Activated CD4-positive, alpha-beta memory T cell treated with anti-CD3 and anti-CD28 coated beads for 36 hours (primary cell): ENCODE measurements at regions of chr10 and their contacts with region 1.

Region 1: DNA sequence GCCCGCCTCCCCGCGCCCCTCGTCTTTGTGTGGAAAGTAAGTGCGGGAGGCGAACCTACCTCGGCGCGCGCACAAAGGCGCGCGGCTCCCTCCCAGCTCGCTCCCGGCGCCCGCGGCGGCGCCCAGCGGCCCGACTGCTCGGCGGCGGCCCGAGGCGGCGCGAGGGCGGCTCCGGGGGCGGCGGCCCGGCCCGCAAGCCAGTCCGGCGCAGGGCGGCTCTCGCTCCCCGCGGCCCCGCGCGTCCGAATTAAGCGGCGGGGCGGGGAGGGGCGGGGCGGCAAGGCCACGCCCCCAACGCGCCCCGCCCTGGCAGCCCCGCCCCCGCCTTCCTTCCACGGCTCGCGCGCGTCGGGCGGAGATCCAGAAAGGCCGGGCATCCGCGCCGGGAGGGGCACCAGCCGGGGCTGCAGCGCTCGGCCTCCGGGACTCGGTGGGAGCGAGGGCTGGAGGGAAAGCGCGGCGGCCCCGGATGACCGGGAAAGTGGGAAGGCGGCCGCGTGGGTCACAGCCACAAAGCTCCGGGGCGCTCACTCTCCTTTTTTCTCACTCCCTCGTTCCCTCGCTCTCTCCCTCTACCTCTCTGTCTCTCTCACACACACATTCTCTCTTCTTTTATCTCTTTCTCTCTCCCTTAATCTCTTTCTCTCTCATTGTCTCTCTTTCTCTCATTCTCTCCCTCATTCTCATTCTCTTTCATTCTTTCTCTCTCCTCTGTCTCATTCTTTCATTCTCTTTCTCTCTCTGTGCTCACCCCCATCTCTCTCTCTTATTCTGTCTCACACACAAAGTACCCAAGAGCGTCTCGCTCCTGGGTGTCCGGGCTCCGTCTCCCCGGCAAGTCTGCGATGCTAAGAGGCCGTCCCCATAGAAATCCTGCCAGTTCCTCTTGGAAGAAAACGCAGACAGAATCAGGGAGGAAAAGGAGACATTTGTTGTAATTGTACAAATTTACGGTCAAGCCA is 170.2 kb downstream of the FAM107B start:
- DNase-seq: peak; percentile 78
- H3K4me3 Mint-ChIP-seq: peak overlapping the region; percentile 93
- H3K27ac Mint-ChIP-seq: peak overlapping the region; percentile 97
- H3K4me1 Mint-ChIP-seq: peaks cover 60% of the 10 kb centered on the region
- H3K27me3 Mint-ChIP-seq: no peaks in the 10 kb centered on the region

Region 2: GRCh38 chr10:14358886-14359573 is 245.4 kb before region 1 on chr10:
- CTCF ChIA-PET with region 1: no interaction called
- POLR2A ChIA-PET with region 1: no interaction called
- intact Hi-C with region 1: no loop called
- DNase-seq: no peak
- H3K4me3 Mint-ChIP-seq: no peak overlapping the region
- H3K27ac Mint-ChIP-seq: no peak overlapping the region
- H3K4me1 Mint-ChIP-seq: no peaks in the 10 kb centered on the region
- H3K27me3 Mint-ChIP-seq: peaks cover 11% of the 10 kb centered on the region

Region 3: DNA sequence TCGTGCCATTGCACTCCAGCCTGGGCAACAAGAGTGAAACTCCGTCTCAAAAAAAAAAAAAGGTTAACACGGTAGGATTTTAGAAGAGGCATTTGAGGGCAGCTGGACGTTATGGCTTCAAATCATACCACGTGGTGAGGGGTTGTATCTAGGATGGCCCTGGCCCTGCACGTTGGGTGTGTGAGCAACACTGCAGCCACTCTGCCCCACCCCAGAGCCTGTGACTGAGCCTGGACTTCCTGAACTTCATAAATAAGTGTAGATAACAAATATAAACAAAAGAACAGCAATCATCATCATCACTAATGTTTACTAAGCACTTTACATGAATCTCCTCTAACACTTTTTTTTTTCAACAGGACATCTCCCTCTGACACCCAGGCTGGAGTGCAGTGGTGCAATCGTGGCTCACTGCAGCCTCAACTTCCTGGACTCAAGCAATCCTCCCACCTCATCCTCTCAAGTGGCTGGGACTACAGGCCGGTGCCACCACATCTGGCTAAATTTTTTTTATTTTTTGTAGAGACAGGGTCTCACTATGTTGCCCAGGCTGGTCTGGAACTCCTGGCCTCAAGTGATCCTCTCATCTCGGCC is 104.2 kb before region 1 on chr10:
- CTCF ChIA-PET with region 1: no interaction called
- POLR2A ChIA-PET with region 1: no interaction called
- intact Hi-C with region 1: loop called (anchors 2 kb)
- DNase-seq: no peak
- H3K4me3 Mint-ChIP-seq: no peak overlapping the region
- H3K27ac Mint-ChIP-seq: no peak overlapping the region
- H3K4me1 Mint-ChIP-seq: peaks cover 2% of the 10 kb centered on the region
- H3K27me3 Mint-ChIP-seq: no peaks in the 10 kb centered on the region

Region 4: DNA sequence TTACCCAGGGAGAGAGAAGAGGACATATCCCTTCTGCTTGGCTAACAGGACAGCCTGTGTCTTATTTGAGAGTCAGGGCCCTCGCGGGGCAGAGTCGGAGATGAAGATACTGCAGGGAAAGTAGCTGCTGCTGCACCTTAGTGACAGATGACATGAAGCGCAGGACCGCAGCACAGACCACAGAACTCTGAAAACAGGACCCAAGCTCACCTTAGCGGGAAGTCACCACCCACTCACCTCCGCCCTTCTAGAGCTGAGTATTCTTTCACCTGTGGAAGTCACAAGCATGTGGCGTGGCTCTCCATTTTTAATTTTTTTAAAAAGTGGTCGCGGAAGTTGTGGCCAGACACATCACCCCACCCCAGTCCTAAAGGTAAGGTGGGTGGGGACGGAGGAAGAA is 21.2 kb before region 1 on chr10:
- CTCF ChIA-PET with region 1: interaction called, 6 read pairs
- POLR2A ChIA-PET with region 1: interaction called, 14 read pairs
- intact Hi-C with region 1: loop called (anchors 1 kb)
- DNase-seq: peak; percentile 93
- H3K4me3 Mint-ChIP-seq: peak overlapping the region; percentile 56
- H3K27ac Mint-ChIP-seq: peak overlapping the region; percentile 98
- H3K4me1 Mint-ChIP-seq: peaks cover 84% of the 10 kb centered on the region
- H3K27me3 Mint-ChIP-seq: no peaks in the 10 kb centered on the region

Region 5: GRCh38 chr10:14617852-14618251 is 13.4 kb after region 1 on chr10:
- CTCF ChIA-PET with region 1: no interaction called
- POLR2A ChIA-PET with region 1: no interaction called
- intact Hi-C with region 1: no loop called
- DNase-seq: no peak
- H3K4me3 Mint-ChIP-seq: no peak overlapping the region
- H3K27ac Mint-ChIP-seq: no peak overlapping the region
- H3K4me1 Mint-ChIP-seq: peaks cover 28% of the 10 kb centered on the region
- H3K27me3 Mint-ChIP-seq: no peaks in the 10 kb centered on the region

Region 6: DNA sequence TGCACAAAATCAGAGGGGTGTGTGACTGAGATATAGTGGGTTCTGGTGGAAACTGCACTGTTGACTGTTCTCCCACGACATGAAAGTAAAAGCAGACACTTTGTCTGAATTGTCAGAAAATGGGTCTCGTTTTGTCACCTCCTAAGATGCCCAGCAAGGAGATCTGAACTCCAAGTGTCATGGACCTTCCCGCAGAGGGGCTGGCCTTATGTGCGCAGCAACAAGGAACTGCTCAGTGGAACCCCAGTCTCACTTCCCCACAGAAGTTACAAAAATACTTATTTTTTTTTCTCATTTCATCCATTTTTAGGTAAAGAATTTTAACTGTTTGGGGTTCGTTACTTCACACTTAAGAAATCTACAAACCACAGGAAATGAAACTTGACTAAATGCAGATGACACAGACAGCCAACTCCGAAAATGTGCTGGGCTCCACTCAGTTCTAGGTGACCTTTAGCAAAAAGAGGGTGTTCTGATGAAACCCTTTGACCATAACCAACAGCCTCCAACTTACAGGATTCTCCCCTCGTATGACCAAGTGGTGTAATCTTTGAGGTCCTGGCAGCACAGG is 55.2 kb after region 1 on chr10:
- CTCF ChIA-PET with region 1: interaction called, 6 read pairs
- POLR2A ChIA-PET with region 1: interaction called, 11 read pairs
- intact Hi-C with region 1: loop called (anchors 1 kb)
- DNase-seq: peak; percentile 72
- H3K4me3 Mint-ChIP-seq: peak overlapping the region; percentile 45
- H3K27ac Mint-ChIP-seq: peak overlapping the region; percentile 92
- H3K4me1 Mint-ChIP-seq: peaks cover 77% of the 10 kb centered on the region
- H3K27me3 Mint-ChIP-seq: no peaks in the 10 kb centered on the region

Region 7: DNA sequence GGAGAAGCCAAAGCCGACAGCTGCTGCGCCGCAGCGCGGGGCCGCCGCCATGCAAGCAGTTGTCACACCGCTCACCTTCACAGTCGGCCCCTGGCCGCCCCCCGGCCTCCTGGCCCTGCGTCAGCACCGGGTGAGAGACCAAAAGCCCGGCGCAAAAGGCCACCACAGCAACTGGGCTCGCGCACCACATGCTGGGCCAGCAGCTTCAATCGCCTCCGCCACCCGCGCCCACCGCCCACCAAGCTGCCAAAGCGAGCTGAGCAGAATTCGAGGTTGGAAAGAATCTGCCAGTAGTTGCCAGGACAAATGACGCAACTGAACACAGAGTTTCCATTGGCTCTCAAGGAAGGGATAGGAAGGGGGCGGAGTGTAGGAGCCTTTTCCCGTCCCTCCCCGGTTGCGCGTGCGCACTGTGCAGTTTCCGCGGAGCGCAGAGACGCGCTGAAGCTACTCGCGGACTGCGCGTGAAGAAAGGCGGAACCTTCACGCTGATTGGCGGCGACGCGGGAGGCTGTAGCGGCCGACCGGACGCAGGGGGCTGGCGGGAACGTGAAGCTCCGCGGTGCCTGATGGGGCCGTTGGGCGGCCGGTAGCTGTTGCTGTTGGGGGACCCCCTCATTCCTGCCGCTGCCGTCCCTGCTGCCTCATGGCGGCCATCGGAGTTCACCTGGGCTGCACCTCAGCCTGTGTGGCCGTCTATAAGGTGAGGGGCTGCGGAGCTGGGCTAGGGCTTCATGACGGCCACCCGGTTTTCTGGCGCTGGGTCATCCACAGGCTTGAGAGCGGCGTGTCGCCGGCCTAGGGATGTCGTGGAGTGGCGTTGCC is 233.5 kb after region 1 on chr10 and contains the starts of genes CDNF, HSPA14 and MSANTD7:
- CTCF ChIA-PET with region 1: interaction called, 7 read pairs
- POLR2A ChIA-PET with region 1: interaction called, 21 read pairs
- intact Hi-C with region 1: loop called (anchors 1 kb)
- DNase-seq: peak; percentile 100
- H3K4me3 Mint-ChIP-seq: peak within 1 kb of the TSS; percentile 93
- H3K27ac Mint-ChIP-seq: peak within 1 kb of the TSS; percentile 94
- H3K4me1 Mint-ChIP-seq: peaks cover 21% of the 10 kb centered on the region
- H3K27me3 Mint-ChIP-seq: no peaks in the 10 kb centered on the region
- total RNA-seq, gene CDNF: 1.6 to 1.8 TPM
- total RNA-seq, gene HSPA14: 31.1 to 31.2 TPM
- total RNA-seq, gene MSANTD7: 16.1 to 18.1 TPM